Activated CD4-positive, alpha-beta T cell treated with anti-CD3 and anti-CD28 coated beads, Interleukin-2, amount 10 ng/mL, durations not matched to agents 24 days and 14 days (primary cell): ENCODE measurements at regions of chr11 and their contacts with region 1.

Region 1: GRCh38 chr11:20162824-20163782 is 2.8 kb upstream of the DBX1 start:
- DNase-seq: no peak
- H3K4me3 Mint-ChIP-seq: no peak overlapping the region
- H3K27ac Mint-ChIP-seq: peak overlapping the region; percentile 53
- H3K4me1 Mint-ChIP-seq: peaks cover 7% of the 10 kb centered on the region
- H3K27me3 Mint-ChIP-seq: peaks cover 83% of the 10 kb centered on the region

Region 2: GRCh38 chr11:19712281-19713220 is 450.6 kb before region 1 on chr11 and contains the start of gene NAV2:
- intact Hi-C with region 1: loop called (anchors 5 kb)
- DNase-seq: peak; percentile 94
- H3K4me3 Mint-ChIP-seq: peak within 1 kb of the TSS; percentile 88
- H3K27ac Mint-ChIP-seq: peak within 1 kb of the TSS; percentile 83
- H3K4me1 Mint-ChIP-seq: peaks cover 21% of the 10 kb centered on the region
- H3K27me3 Mint-ChIP-seq: peaks cover 64% of the 10 kb centered on the region
- total RNA-seq, gene NAV2: 0.28 TPM in 1 of 2 replicates, not detected in the other

Region 3: DNA sequence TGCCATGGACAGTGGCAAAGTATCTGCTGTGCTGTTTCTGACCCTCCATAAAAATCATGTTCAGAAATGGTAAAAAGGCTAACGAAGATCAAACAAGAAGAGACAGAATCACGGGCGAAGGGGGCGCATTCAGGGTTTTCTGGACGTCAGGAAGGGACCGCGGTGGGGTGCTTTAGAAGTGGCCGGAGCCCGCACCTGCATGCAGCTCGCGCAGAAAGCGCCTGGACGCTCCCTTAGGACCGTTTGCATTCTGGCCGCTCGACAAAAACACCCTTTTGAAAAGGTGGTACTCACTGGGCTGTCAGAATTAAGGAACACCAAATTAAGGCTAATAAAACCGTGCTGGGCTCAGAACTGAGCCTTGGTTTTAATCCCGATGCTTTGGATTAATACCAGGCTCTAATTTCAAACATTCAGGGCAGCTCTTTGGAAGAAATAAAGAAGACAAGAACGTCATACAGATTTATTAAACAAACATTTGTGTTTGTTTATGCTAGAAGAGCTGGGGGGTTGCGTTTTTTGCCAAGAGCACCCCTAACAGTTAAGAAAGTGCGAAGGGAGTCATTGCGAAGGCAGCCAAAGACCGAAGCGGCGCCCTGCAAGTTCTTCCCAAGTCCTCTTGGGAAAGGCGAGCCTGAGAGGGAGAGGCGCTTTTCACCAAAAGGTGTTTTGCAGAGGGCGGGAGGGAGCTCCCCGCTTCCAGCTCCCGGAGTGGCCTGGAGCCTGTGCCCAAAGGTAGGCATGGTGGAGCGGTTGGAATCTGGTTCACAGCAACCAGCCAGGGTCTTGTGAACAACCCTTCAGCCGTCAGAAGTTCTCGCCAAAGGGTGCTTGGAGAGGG is 44.9 kb after region 1 on chr11:
- intact Hi-C with region 1: loop called (anchors 5 kb)
- DNase-seq: no peak
- H3K4me3 Mint-ChIP-seq: no peak overlapping the region
- H3K27ac Mint-ChIP-seq: no peak overlapping the region
- H3K4me1 Mint-ChIP-seq: no peaks in the 10 kb centered on the region
- H3K27me3 Mint-ChIP-seq: peaks cover 47% of the 10 kb centered on the region

Region 4: GRCh38 chr11:20599221-20600019 is 436.3 kb after region 1 on chr11 and contains the start of gene SLC6A5:
- intact Hi-C with region 1: loop called (anchors 2 kb)
- DNase-seq: peak; percentile 81
- H3K4me3 Mint-ChIP-seq: no peak within 1 kb of the TSS
- H3K27ac Mint-ChIP-seq: peak within 1 kb of the TSS; percentile 3
- H3K4me1 Mint-ChIP-seq: no peaks in the 10 kb centered on the region
- H3K27me3 Mint-ChIP-seq: peaks cover 92% of the 10 kb centered on the region
- total RNA-seq, gene SLC6A5: not detected in 2 replicates

Region 5: DNA sequence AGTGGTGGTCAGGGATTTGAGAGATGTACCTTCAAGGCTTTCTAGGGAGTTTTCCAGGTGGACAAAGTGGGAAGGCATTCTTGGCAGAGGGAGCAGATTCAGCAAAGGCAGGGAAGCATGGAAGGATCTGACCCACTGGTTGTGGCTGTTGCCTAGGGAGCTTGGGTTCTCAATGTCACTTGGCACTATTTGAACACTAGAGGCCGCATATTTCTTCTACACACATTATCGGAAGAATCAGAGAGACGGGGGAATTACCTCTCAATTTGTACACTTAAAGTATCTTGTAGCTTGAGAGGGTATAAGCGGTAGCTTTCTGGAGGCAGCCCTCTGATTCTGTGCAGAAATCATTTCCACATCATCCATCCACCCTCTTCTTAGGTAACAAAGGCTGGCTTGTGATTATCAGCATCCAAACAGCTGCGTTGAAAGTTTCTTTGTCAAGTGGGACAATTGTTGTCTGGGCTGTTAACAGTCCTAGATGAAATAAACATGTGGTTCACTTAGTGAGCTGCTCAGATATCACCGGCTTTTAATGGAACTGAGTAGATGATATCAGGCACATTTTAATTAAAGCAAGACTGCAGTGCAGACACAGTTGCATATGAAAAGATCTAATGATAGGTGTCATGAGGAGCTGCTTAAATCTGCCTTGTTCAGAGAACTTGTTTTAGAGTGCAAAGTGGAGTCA is 508.9 kb after region 1 on chr11:
- intact Hi-C with region 1: loop called (anchors 5 kb)
- DNase-seq: no peak
- H3K4me3 Mint-ChIP-seq: no peak overlapping the region
- H3K27ac Mint-ChIP-seq: no peak overlapping the region
- H3K4me1 Mint-ChIP-seq: no peaks in the 10 kb centered on the region
- H3K27me3 Mint-ChIP-seq: peaks cover 56% of the 10 kb centered on the region